ENCODE measurements at regions of chr3 and their contacts with region 1.

Region 1: DNA sequence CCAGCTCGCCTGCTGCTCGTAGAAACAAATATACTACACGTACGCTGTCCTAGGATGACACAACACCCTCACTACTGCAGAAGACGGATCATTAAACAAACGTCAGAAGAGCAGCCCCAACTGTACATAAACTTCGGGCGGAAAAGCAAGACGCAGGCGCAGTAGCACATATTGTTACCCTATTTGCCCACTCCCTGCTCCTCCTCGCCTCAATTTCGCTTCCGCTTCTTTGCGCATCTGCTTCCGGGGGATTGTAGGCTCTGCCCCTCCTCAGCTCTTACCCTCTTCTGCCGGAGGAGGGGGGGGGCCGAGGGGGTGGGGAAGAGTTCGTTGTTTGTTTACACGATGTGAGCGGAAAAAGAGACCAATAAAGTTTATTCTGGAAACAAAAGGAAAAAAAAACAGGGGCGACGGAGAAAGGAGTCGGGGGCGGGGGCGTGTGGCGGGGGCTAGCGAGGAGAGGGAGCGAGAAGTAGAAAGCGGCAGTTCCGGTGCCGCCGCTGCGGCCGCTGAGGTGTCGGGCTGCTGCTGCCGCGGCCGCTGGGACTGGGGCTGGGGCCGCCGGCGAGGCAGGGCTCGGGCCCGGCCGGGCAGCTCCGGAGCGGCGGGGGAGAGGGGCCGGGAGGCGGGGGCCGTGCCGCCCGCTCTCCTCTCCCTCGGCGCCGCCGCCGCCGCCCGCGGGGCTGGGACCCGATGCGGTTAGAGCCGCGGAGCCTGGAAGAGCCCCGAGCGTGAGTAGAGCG is at the start of gene PIK3CA:
- DNase-seq: peak; percentile 85 to 99 (median 90)
- ATAC-seq: peak; percentile 74
- H3K4me3 ChIP-seq: peak within 1 kb of the TSS; percentile 73
- H3K4me3 Mint-ChIP-seq: peak within 1 kb of the TSS; percentile 95
- H3K27ac ChIP-seq: peak within 1 kb of the TSS; percentile 90 to 100
- H3K27ac Mint-ChIP-seq: peak within 1 kb of the TSS; percentile 91
- H3K4me1 ChIP-seq: peaks cover 2% of the 10 kb centered on the region
- H3K4me1 Mint-ChIP-seq: peaks cover 40% of the 10 kb centered on the region
- H3K27me3 ChIP-seq: no peaks in the 10 kb centered on the region
- H3K27me3 Mint-ChIP-seq: no peaks in the 10 kb centered on the region
- CTCF ChIP-seq: no peak
- total RNA-seq, gene PIK3CA: 57.1 to 63.1 TPM

Region 2: DNA sequence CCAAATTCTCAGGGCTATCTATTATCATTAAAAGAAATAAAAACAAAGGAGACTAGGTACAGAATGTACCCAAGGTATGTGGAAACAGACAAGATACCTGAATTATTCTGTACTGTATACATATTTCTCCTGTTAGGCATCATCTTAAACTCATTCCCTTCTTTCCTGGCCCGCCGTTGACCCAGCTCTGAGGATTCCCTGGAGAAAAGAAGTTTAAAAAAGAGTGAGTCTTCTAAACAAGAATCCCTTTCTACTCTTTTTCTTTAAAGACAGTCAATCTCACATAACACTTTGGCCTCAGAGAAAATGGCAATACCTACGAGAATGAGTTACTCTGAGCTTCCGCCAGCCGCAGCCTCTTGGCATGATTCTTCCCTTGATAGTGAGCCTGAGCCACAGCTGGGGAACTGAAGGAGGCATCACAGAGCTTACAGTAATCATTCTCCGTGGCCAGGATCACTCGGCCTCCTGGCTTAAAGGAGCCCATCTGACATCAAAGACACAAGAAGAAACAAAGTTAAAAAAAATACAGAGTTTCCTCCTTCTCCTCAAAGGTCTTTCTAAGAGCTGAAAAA is 120.6 kb before region 1 on chr3:
- CTCF ChIA-PET with region 1: no interaction called
- POLR2A ChIA-PET with region 1: interaction called, 34 read pairs
- intact Hi-C with region 1: no loop called
- DNase-seq: peak in 6 of 14 experiments; percentile 6 to 45 (median 32)
- ATAC-seq: peak; percentile 77
- H3K4me3 ChIP-seq: no peak overlapping the region
- H3K4me3 Mint-ChIP-seq: peak overlapping the region; percentile 71
- H3K27ac ChIP-seq: peak overlapping the region; percentile 13 to 44
- H3K27ac Mint-ChIP-seq: peak overlapping the region; percentile 87
- H3K4me1 ChIP-seq: peaks cover 9% of the 10 kb centered on the region
- H3K4me1 Mint-ChIP-seq: peaks cover 28% of the 10 kb centered on the region
- H3K27me3 ChIP-seq: no peaks in the 10 kb centered on the region
- H3K27me3 Mint-ChIP-seq: no peaks in the 10 kb centered on the region
- CTCF ChIP-seq: no peak

Region 3: DNA sequence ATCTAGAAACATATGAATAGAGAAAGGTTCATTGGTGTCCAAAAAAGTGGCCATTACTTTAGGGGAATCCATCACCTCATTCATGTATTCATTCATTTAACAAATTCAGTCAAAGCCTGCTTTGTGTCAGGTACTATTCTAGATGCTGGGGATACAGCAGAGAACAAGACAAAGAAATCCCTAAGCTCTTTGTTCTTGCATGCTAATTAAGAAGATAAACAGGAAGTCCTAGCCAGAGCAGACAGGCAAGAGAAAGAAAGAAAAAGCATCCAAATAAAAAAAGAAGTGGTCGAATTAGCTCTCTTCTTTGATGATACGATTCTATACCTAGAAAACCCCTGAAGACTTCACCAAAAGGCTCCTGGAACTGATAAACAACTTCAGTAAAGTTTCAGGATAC is 64.1 kb before region 1 on chr3:
- CTCF ChIA-PET with region 1: no interaction called
- POLR2A ChIA-PET with region 1: interaction called, 11 read pairs
- intact Hi-C with region 1: no loop called
- DNase-seq: peak in 1 of 14 experiments; percentile 29
- ATAC-seq: no peak
- H3K4me3 ChIP-seq: no peak overlapping the region
- H3K4me3 Mint-ChIP-seq: no peak overlapping the region
- H3K27ac ChIP-seq: no peak overlapping the region
- H3K27ac Mint-ChIP-seq: peak overlapping the region; percentile 3
- H3K4me1 ChIP-seq: no peaks in the 10 kb centered on the region
- H3K4me1 Mint-ChIP-seq: peaks cover 10% of the 10 kb centered on the region
- H3K27me3 ChIP-seq: no peaks in the 10 kb centered on the region
- H3K27me3 Mint-ChIP-seq: no peaks in the 10 kb centered on the region
- CTCF ChIP-seq: no peak

Region 4: GRCh38 chr3:179168933-179169332 is 20.9 kb after region 1 on chr3:
- CTCF ChIA-PET with region 1: no interaction called
- POLR2A ChIA-PET with region 1: interaction called, 7 read pairs
- intact Hi-C with region 1: loop called in 1 of 2 experiments (anchors 2 kb)
- DNase-seq: no peak
- ATAC-seq: no peak
- H3K4me3 ChIP-seq: no peak overlapping the region
- H3K4me3 Mint-ChIP-seq: no peak overlapping the region
- H3K27ac ChIP-seq: no peak overlapping the region
- H3K27ac Mint-ChIP-seq: no peak overlapping the region
- H3K4me1 ChIP-seq: no peaks in the 10 kb centered on the region
- H3K4me1 Mint-ChIP-seq: peaks cover 76% of the 10 kb centered on the region
- H3K27me3 ChIP-seq: no peaks in the 10 kb centered on the region
- H3K27me3 Mint-ChIP-seq: no peaks in the 10 kb centered on the region
- CTCF ChIP-seq: no peak

Region 5: DNA sequence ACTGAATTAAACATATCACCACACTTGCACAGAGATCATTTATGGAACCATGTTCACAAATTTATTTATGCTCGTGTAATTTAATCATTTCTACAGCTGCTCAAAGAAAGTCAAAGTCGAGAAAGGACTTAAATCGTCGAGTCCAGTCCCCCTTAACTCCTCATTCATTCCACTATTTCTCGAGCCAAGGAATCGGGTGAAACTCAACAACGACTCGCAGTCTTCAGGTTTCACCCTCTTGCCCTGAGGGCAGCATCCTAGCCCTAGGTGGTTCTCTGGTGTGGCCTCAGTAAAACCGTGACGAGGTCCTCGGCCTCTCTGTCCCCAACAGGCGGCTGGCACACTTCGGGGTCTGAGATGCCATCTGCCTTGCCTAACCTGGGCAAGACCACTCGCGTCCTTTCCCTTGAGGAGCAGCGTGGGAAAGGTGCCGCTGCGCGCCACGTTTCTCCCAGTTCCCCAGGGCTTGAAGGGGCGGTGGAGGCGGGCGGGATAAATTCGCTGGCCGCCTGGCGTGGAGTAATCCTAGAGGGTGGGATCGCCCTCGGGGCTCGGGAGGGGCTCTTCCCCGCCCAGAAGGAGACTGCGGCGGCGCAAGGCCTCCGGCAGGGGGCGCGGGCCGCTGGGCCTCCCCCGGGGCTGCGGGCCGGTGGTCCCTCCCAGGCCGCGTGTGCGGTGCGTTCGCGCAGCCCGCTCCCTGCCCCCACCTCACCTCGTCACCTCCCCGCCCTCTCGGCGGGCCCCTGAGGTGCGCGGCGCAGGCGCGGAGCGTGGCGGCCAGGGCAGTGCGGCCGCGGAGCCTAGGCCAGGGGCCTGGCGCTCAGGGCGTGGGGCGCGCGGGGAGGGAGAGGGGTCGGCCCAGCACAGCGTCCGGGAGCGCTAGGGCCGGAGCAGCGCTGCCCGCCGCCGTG is 174.5 kb after region 1 on chr3 and contains the start of gene ZNF639:
- CTCF ChIA-PET with region 1: interaction called, 9 read pairs
- POLR2A ChIA-PET with region 1: interaction called, 43 read pairs
- intact Hi-C with region 1: loop called (anchors 1 to 2 kb)
- DNase-seq: peak; percentile 73 to 95 (median 80)
- ATAC-seq: peak; percentile 84
- H3K4me3 ChIP-seq: peak within 1 kb of the TSS; percentile 72
- H3K4me3 Mint-ChIP-seq: peak within 1 kb of the TSS; percentile 92
- H3K27ac ChIP-seq: peak within 1 kb of the TSS; percentile 76 to 97
- H3K27ac Mint-ChIP-seq: peak within 1 kb of the TSS; percentile 98
- H3K4me1 ChIP-seq: peaks cover 25% of the 10 kb centered on the region
- H3K4me1 Mint-ChIP-seq: peaks cover 37% of the 10 kb centered on the region
- H3K27me3 ChIP-seq: no peaks in the 10 kb centered on the region
- H3K27me3 Mint-ChIP-seq: no peaks in the 10 kb centered on the region
- CTCF ChIP-seq: peak; percentile 73
- total RNA-seq, gene ZNF639: 88.1 to 90.8 TPM

Region 6: GRCh38 chr3:179604321-179605078 is 456.5 kb after region 1 on chr3 and contains the starts of genes MRPL47 and NDUFB5:
- CTCF ChIA-PET with region 1: no interaction called
- POLR2A ChIA-PET with region 1: interaction called, 6 read pairs
- intact Hi-C with region 1: loop called in 1 of 2 experiments (anchors 5 kb)
- DNase-seq: peak; percentile 84 to 98 (median 89)
- ATAC-seq: peak; percentile 99
- H3K4me3 ChIP-seq: peak within 1 kb of the TSS; percentile 80
- H3K4me3 Mint-ChIP-seq: peak within 1 kb of the TSS; percentile 91
- H3K27ac ChIP-seq: peak within 1 kb of the TSS; percentile 90 to 91
- H3K27ac Mint-ChIP-seq: peak within 1 kb of the TSS; percentile 95
- H3K4me1 ChIP-seq: peaks cover 21% of the 10 kb centered on the region
- H3K4me1 Mint-ChIP-seq: peaks cover 56% of the 10 kb centered on the region
- H3K27me3 ChIP-seq: no peaks in the 10 kb centered on the region
- H3K27me3 Mint-ChIP-seq: no peaks in the 10 kb centered on the region
- CTCF ChIP-seq: no peak
- total RNA-seq, gene MRPL47: 24.8 to 28.6 TPM
- total RNA-seq, gene NDUFB5: 20.3 to 24.2 TPM